WTC11 (cell line): ENCODE measurements at regions of chr12 and their contacts with region 1.

Region 1: DNA sequence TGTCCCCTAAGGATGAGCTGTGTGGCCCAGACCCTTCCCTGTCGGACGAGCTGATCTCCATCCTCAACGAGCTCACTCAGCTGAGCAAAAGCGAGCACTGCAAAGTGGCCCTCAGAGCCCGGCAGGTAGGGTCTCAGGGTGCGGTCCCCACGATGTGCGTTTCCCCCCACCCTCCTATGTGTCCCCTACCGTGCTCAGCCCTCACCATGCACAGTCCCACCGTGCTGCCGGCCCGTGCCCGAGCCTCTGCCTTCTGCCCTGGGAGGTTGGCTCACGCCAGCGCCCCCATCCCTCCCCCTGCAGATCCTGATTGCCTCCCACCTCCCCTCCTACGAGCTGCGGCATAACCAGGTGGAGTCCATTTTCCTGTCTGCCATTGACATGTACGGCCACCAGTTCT is 86.6 kb downstream of the FOXN4 start:
- DNase-seq: no peak
- ATAC-seq: no peak
- H3K4me3 Mint-ChIP-seq: no peak overlapping the region
- H3K27ac Mint-ChIP-seq: peak overlapping the region; percentile 79; the same call in 1 of the 2 replicates
- H3K4me1 Mint-ChIP-seq: no peaks in the 10 kb centered on the region
- H3K27me3 Mint-ChIP-seq: no peaks in the 10 kb centered on the region
- CTCF ChIP-seq: no peak

Region 2: DNA sequence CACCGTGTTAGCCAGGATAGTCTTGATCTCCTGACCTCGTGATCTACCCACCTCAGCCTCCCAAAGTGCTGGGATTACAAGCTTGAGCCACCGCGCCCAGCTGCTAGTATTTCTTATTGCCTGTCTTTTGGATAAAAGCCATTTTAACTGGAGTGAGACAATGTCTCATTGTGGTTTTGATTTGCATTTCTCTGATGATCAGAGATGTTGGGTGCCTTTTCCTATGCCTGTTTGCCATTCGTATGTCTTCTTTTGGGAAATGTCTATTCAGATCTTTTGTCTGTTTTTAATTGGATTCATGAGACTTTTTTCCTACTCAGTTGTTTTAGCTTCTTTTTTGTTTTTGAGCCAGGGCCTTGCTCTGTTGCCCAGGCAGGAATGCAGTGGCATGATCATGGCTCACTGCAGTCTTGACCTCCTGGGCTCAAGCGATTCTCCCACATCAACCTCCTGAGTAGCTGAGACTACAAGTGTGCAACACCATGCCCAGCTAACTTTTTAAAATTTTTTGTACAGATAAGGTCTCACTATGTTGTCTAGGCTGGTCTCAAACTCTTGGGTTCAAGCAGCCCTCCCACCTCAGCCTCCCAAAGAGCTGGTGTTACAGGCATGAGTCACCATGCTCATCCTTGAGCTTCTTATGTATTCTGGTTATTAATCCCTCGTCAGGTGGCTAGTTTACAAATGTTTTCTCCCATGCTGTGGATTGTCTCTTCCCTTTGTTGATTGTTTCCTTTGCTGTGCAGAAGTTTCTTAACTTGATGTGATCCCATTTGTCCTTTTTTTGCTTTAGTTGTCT is 40.3 kb before region 1 on chr12:
- CTCF ChIA-PET with region 1: no interaction called
- POLR2A ChIA-PET with region 1: interaction called, 11 read pairs
- DNase-seq: no peak
- ATAC-seq: no peak
- H3K4me3 Mint-ChIP-seq: no peak overlapping the region
- H3K27ac Mint-ChIP-seq: peak overlapping the region; percentile 18; the same call in 1 of the 2 replicates
- H3K4me1 Mint-ChIP-seq: no peaks in the 10 kb centered on the region
- H3K27me3 Mint-ChIP-seq: no peaks in the 10 kb centered on the region
- CTCF ChIP-seq: no peak